GM23248 (cell line): ENCODE measurements at regions of chr14 and their contacts with region 1.

Region 1: GRCh38 chr14:103688906-103689902 is 26.0 kb downstream of the XRCC3 start:
- DNase-seq: peak; percentile 79
- H3K4me3 ChIP-seq: no peak overlapping the region
- H3K27ac ChIP-seq: peak overlapping the region; percentile 64
- H3K4me1 ChIP-seq: peaks cover 18% of the 10 kb centered on the region
- H3K27me3 ChIP-seq: no peaks in the 10 kb centered on the region

Region 2: GRCh38 chr14:102777711-102778337 is 911.4 kb before region 1 on chr14:
- in situ Hi-C with region 1: no loop called
- DNase-seq: peak; percentile 64
- H3K4me3 ChIP-seq: peak overlapping the region; percentile 78
- H3K27ac ChIP-seq: peak overlapping the region; percentile 77
- H3K4me1 ChIP-seq: peaks cover 18% of the 10 kb centered on the region
- H3K27me3 ChIP-seq: no peaks in the 10 kb centered on the region

Region 3: DNA sequence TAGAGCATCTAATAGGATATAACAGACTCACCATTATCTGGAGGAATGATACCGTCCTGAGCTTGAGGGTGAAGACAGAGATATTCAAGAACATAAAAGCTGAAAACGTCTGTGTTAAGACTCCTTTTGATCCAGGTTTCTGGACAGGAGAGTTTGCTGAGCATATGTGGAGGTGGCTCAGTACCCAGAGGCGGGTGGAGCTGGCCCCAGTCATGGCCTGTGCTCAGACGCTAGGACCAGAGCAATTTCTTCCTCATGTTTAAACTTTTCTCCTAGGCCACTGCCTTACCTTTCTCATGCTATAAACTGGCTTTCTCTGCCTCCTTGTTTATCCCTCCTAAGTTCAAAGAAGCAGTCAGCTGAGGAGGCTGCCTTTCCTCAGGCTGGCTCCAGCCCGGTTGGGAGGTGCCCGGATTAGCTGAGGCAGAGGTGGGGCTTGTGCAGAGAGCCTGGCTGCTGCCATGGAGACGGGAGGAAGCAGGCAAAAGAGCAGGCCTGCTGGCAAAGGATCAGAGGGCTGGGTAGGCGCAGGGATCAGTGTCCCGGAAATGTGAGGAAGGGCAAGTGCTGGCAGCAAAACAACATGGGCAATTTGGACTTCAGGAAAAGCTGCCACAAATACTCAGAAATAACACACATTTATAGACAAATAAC is 112.7 kb before region 1 on chr14:
- in situ Hi-C with region 1: loop called (anchors 10 kb)
- DNase-seq: peak; percentile 97
- H3K4me3 ChIP-seq: no peak overlapping the region
- H3K27ac ChIP-seq: peak overlapping the region; percentile 81
- H3K4me1 ChIP-seq: peaks cover 13% of the 10 kb centered on the region
- H3K27me3 ChIP-seq: no peaks in the 10 kb centered on the region

Region 4: DNA sequence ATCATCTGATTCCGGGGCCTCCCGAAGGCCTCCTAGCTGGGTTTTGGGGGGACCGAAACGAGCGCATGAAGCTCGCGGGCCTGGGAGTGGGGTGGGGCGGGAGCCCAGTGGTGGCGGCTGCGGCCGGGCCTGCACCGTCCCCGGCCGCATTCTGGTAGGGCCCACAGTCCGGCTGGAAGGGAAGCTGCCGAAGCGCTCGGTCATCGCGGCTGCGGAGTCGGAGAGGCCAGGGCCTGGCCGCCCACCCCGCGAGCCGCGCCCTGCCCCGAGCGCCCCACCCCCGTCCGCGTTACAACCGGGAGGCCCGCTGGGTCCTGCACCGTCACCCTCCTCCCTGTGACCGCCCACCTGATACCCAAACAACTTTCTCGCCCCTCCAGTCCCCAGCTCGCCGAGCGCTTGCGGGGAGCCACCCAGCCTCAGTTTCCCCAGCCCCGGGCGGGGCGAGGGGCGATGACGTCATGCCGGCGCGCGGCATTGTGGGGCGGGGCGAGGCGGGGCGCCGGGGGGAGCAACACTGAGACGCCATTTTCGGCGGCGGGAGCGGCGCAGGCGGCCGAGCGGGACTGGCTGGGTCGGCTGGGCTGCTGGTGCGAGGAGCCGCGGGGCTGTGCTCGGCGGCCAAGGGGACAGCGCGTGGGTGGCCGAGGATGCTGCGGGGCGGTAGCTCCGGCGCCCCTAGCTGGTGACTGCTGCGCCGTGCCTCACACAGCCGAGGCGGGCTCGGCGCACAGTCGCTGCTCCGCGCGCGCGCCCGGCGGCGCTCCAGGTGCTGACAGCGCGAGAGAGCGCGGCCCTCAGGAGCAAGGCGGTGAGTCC is 60.3 kb before region 1 on chr14 and contains the start of gene KLC1:
- in situ Hi-C with region 1: no loop called
- DNase-seq: peak; percentile 89
- H3K4me3 ChIP-seq: peak within 1 kb of the TSS; percentile 100
- H3K27ac ChIP-seq: peak within 1 kb of the TSS; percentile 98
- H3K4me1 ChIP-seq: peaks cover 46% of the 10 kb centered on the region
- H3K27me3 ChIP-seq: no peaks in the 10 kb centered on the region
- total RNA-seq, gene KLC1: 339 and 410 TPM in 2 replicates

Region 5: GRCh38 chr14:103867523-103867953 is 178.3 kb after region 1 on chr14:
- in situ Hi-C with region 1: no loop called
- DNase-seq: no peak
- H3K4me3 ChIP-seq: no peak overlapping the region
- H3K27ac ChIP-seq: no peak overlapping the region
- H3K4me1 ChIP-seq: 0 out of 2 replicates have a peak, but pooled peaks cover 4% of the 10 kb centered on the region
- H3K27me3 ChIP-seq: no peaks in the 10 kb centered on the region